Calu3 (cell line): ENCODE measurements at regions of chr3 and their contacts with region 1.

Region 1: DNA sequence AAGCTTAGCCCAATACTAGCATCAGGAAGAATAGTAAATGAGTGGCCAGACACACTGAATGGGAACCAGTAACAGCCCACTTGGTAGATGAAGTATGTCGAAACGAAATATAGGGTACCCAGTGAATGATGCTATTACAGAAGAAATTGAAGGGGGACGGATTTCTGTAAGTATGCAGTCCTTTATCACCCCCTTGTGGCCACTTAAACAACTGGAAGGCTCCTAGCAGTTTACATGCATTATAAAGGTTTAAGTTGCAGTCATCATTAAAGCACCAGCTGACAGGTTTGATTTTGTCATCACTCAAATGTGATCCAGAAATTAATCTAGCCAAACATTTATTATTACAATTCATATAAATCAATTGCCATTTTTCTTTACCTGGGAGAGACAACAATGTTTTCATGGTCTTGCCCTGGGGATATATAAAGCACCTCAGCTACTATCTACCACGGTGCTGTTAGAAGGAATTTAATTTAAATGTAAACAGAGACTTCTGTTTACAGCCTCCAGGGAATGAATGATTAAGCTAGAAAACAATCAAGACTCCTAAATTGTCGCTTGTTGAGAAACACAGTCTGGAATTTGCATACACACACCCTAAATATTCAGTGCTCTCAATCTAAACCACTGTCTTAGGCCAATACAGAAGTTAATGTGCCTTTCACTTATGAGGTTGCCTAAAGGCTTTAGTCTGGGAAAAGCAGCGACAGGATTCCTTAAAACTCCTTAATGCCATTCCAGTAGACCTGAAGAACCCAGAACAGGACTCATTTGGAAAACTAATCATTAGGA is 7.8 kb downstream of the EIF1B start:
- DNase-seq: peak; percentile 35
- H3K4me3 Mint-ChIP-seq: no peak overlapping the region
- H3K27ac Mint-ChIP-seq: no peak overlapping the region
- H3K4me1 Mint-ChIP-seq: peaks cover 6% of the 10 kb centered on the region
- H3K27me3 Mint-ChIP-seq: no peaks in the 10 kb centered on the region
- CTCF ChIP-seq: peak; percentile 32

Region 2: GRCh38 chr3:39414421-39414907 is 902.8 kb before region 1 on chr3:
- CTCF ChIA-PET with region 1: no interaction called
- intact Hi-C with region 1: loop called (anchors 10 kb)
- DNase-seq: peak; percentile 18
- H3K4me3 Mint-ChIP-seq: no peak overlapping the region
- H3K27ac Mint-ChIP-seq: peak overlapping the region; percentile 17
- H3K4me1 Mint-ChIP-seq: peaks cover 8% of the 10 kb centered on the region
- H3K27me3 Mint-ChIP-seq: no peaks in the 10 kb centered on the region
- CTCF ChIP-seq: no peak

Region 3: GRCh38 chr3:39447637-39448483 is 869.4 kb before region 1 on chr3:
- CTCF ChIA-PET with region 1: no interaction called
- intact Hi-C with region 1: loop called (anchors 10 kb)
- DNase-seq: peak; percentile 72
- H3K4me3 Mint-ChIP-seq: no peak overlapping the region
- H3K27ac Mint-ChIP-seq: no peak overlapping the region
- H3K4me1 Mint-ChIP-seq: peaks cover 4% of the 10 kb centered on the region
- H3K27me3 Mint-ChIP-seq: no peaks in the 10 kb centered on the region
- CTCF ChIP-seq: peak; percentile 68

Region 4: DNA sequence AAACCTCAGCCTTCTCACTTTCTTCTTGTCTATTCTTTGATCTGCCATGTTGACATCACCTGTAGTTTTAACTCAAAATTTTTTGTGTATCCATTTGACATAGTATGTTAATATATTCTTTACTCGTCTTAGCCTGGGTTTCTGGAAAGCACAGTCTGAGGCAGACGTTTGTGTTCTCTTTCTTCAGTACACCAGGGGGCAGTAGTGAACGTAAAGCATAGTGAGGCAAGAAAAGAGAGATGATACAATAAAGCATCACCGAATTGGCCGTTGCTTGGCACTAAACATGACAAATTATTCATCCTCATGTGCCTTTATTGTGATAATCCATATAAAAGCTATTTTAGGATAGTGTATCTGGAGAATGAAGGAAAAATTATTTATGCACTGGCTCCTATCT is 648.8 kb before region 1 on chr3:
- CTCF ChIA-PET with region 1: no interaction called
- intact Hi-C with region 1: loop called (anchors 2 kb)
- DNase-seq: peak; percentile 15
- H3K4me3 Mint-ChIP-seq: no peak overlapping the region
- H3K27ac Mint-ChIP-seq: no peak overlapping the region
- H3K4me1 Mint-ChIP-seq: no peaks in the 10 kb centered on the region
- H3K27me3 Mint-ChIP-seq: no peaks in the 10 kb centered on the region
- CTCF ChIP-seq: peak; percentile 53

Region 5: DNA sequence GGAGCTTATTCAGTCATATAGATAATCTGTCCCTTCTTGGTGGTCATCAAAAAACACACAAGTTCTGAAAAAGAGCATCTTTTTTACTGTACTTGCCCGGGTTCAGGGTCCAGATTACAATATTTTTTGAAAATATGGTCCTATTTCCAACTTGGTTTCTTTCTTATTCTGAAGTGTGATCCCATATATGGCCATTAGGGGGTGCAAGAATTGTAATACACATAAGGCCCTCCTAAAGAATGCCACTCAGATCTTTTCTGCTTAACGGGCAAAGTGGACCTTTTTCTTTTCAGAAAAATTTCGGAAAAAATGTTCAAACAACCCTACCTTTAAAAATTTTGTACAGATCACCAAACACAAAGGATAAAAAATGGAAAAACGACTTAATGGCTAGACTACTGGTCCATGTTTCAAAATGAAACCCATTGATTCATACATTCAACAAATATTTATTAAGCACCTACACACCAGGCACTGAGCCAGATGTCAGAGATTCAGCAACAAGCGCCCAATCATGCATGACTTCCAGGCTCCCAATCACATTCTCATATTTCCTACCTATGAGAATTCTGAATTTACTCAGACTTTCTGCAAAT is 609.8 kb before region 1 on chr3:
- CTCF ChIA-PET with region 1: no interaction called
- intact Hi-C with region 1: loop called (anchors 10 kb)
- DNase-seq: peak; percentile 32
- H3K4me3 Mint-ChIP-seq: no peak overlapping the region
- H3K27ac Mint-ChIP-seq: no peak overlapping the region
- H3K4me1 Mint-ChIP-seq: peaks cover 10% of the 10 kb centered on the region
- H3K27me3 Mint-ChIP-seq: no peaks in the 10 kb centered on the region
- CTCF ChIP-seq: no peak

Region 6: GRCh38 chr3:39724233-39724846 is 592.9 kb before region 1 on chr3:
- CTCF ChIA-PET with region 1: no interaction called
- intact Hi-C with region 1: loop called (anchors 5 kb)
- DNase-seq: peak; percentile 29
- H3K4me3 Mint-ChIP-seq: no peak overlapping the region
- H3K27ac Mint-ChIP-seq: no peak overlapping the region
- H3K4me1 Mint-ChIP-seq: no peaks in the 10 kb centered on the region
- H3K27me3 Mint-ChIP-seq: no peaks in the 10 kb centered on the region
- CTCF ChIP-seq: no peak

Region 7: GRCh38 chr3:40068636-40069035 is 248.6 kb before region 1 on chr3:
- CTCF ChIA-PET with region 1: no interaction called
- intact Hi-C with region 1: no loop called
- DNase-seq: no peak
- H3K4me3 Mint-ChIP-seq: no peak overlapping the region
- H3K27ac Mint-ChIP-seq: no peak overlapping the region
- H3K4me1 Mint-ChIP-seq: peaks cover 14% of the 10 kb centered on the region
- H3K27me3 Mint-ChIP-seq: no peaks in the 10 kb centered on the region
- CTCF ChIP-seq: no peak

Region 8: GRCh38 chr3:40191850-40192448 is 125.3 kb before region 1 on chr3:
- CTCF ChIA-PET with region 1: interaction called, 3 read pairs
- intact Hi-C with region 1: loop called (anchors 1 kb)
- DNase-seq: peak; percentile 75
- H3K4me3 Mint-ChIP-seq: no peak overlapping the region
- H3K27ac Mint-ChIP-seq: no peak overlapping the region
- H3K4me1 Mint-ChIP-seq: no peaks in the 10 kb centered on the region
- H3K27me3 Mint-ChIP-seq: no peaks in the 10 kb centered on the region
- CTCF ChIP-seq: peak; percentile 89

Region 9: GRCh38 chr3:40337136-40338108 is 20.2 kb after region 1 on chr3:
- CTCF ChIA-PET with region 1: no interaction called
- intact Hi-C with region 1: no loop called
- DNase-seq: no peak
- H3K4me3 Mint-ChIP-seq: no peak overlapping the region
- H3K27ac Mint-ChIP-seq: no peak overlapping the region
- H3K4me1 Mint-ChIP-seq: no peaks in the 10 kb centered on the region
- H3K27me3 Mint-ChIP-seq: no peaks in the 10 kb centered on the region
- CTCF ChIP-seq: no peak